ENCODE measurements at regions of chr6 and their contacts with region 1.

Region 1: DNA sequence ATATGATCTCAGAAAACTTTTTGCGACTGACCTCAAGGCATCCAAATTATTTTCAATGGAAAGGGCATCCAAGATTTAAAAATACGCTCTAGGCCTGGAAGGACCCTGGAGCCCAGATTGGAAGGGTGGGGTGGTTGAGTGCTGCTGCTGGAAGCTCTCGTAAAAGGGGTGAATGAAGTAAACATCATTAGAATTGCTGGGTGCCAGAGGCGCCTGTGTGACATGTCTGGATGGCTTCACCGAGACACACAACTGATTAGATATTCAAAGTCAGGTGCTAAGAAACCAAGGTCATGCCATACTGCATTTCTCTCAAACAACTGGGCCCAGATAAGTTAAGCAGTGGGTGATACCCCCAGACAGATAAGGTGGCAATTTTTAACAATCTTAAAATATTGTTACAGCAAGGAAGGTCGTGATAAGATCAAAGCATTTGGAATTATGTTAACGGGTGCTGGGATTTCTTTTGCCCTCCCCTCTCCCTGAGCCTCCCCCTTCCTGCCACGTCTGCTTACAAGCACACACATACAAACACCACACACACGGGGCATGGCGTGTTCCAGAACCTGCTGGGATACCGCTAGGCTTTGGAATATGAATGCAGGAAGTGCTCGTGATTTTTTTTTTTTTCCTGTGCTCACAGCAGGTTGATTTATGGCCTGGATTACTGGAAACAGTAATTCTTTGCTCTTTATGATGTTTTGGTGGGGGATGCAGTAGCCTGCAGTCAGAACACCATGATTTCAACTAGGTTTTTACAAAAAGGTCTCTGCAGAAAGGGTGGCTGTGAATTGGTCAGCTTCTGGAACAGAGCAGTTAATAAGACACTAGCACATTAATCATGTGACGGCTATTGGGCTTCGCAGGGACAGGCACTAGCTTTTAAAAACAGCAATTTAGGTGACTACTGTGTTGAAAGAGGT is 551.2 kb downstream of the QKI start:
- DNase-seq: peak; percentile 45
- ATAC-seq: peak; percentile 38 to 41

Region 2: GRCh38 chr6:163793011-163793983 is 172.4 kb before region 1 on chr6:
- intact Hi-C with region 1: no loop called
- DNase-seq: no peak
- ATAC-seq: peak in 1 of 2 donors; percentile 83

Region 3: GRCh38 chr6:164097557-164098398 is 132.1 kb after region 1 on chr6:
- intact Hi-C with region 1: loop called (anchors 2 to 10 kb)
- DNase-seq: no peak
- ATAC-seq: peak; percentile 48 to 75

Region 4: DNA sequence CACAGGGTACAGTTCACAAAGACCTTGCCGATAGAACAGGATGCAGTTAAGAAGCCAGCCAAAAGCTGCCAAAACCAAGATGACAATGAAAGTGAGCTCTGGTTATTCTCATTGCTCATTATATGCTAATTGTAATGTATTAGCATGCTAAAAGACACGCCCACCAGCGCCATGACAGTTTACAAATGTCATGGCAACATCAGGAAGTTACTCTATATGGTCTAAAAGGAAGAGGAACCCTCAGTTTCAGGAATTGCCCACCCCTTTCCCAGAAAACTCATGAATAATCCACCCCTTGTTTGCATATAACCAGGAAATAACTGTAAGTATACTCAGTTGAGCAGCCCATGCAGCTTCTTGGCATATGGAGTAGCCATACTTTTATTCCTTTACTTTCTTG is 197.6 kb after region 1 on chr6:
- intact Hi-C with region 1: no loop called
- DNase-seq: no peak
- ATAC-seq: no peak

Measured in left cardiac atrium (tissue), 4 donors.